Activated naive CD4-positive, alpha-beta T cell treated with anti-CD3 and anti-CD28 coated beads, Interleukin-2, amount 10 ng/mL, durations not matched to agents 7 days and 5 days (primary cell): ENCODE measurements at regions of chr12 and their contacts with region 1.

Region 1: GRCh38 chr12:6285063-6285477 is 25.4 kb upstream of the PLEKHG6 start:
- DNase-seq: peak; percentile 69
- H3K4me3 Mint-ChIP-seq: no peak overlapping the region
- H3K27ac Mint-ChIP-seq: no peak overlapping the region
- H3K4me1 Mint-ChIP-seq: no peaks in the 10 kb centered on the region
- H3K27me3 Mint-ChIP-seq: peaks cover 35% of the 10 kb centered on the region

Region 2: GRCh38 chr12:5988659-5989116 is 296.4 kb before region 1 on chr12:
- CTCF ChIA-PET with region 1: interaction called, 15 read pairs
- DNase-seq: peak; percentile 81
- H3K4me3 Mint-ChIP-seq: no peak overlapping the region
- H3K27ac Mint-ChIP-seq: no peak overlapping the region
- H3K4me1 Mint-ChIP-seq: no peaks in the 10 kb centered on the region
- H3K27me3 Mint-ChIP-seq: peaks cover 10% of the 10 kb centered on the region

Region 3: GRCh38 chr12:6062757-6063735 is 222.0 kb before region 1 on chr12:
- CTCF ChIA-PET with region 1: interaction called, 28 read pairs
- DNase-seq: peak; percentile 73
- H3K4me3 Mint-ChIP-seq: no peak overlapping the region
- H3K27ac Mint-ChIP-seq: no peak overlapping the region
- H3K4me1 Mint-ChIP-seq: no peaks in the 10 kb centered on the region
- H3K27me3 Mint-ChIP-seq: peaks cover 54% of the 10 kb centered on the region

Region 4: GRCh38 chr12:6195665-6196535 is 89.2 kb before region 1 on chr12:
- CTCF ChIA-PET with region 1: interaction called, 109 read pairs
- DNase-seq: peak; percentile 80
- H3K4me3 Mint-ChIP-seq: no peak overlapping the region
- H3K27ac Mint-ChIP-seq: no peak overlapping the region
- H3K4me1 Mint-ChIP-seq: peaks cover 6% of the 10 kb centered on the region
- H3K27me3 Mint-ChIP-seq: peaks cover 55% of the 10 kb centered on the region